Lower leg skin (tissue), 4 donors: ENCODE measurements at regions of chr11 and their contacts with region 1.

Region 1: GRCh38 chr11:45155058-45155551 is 8.7 kb downstream of the PRDM11 start:
- DNase-seq: peak in 1 of 2 donors; percentile 79
- H3K4me3 ChIP-seq: no peak overlapping the region
- CTCF ChIP-seq: no peak
- POLR2A ChIP-seq: no peak

Region 2: GRCh38 chr11:45141171-45141570 is 13.9 kb before region 1 on chr11:
- intact Hi-C with region 1: loop called (anchors 1 kb)
- DNase-seq: no peak
- H3K4me3 ChIP-seq: no peak overlapping the region
- CTCF ChIP-seq: no peak
- POLR2A ChIP-seq: no peak